CD4-positive, alpha-beta T cell (primary cell): ENCODE measurements at regions of chr17 and their contacts with region 1.

Region 1: GRCh38 chr17:42720996-42721583 is 23.8 kb downstream of the EZH1 start:
- DNase-seq: peak in 9 of 14 experiments; percentile 2 to 80 (median 27)
- ATAC-seq: peak; percentile 94
- H3K4me3 ChIP-seq: no peak overlapping the region
- H3K4me3 Mint-ChIP-seq: no peak overlapping the region
- H3K27ac ChIP-seq: no peak overlapping the region
- H3K27ac Mint-ChIP-seq: no peak overlapping the region
- H3K4me1 ChIP-seq: no peaks in the 10 kb centered on the region
- H3K4me1 Mint-ChIP-seq: no peaks in the 10 kb centered on the region
- H3K27me3 ChIP-seq: no peaks in the 10 kb centered on the region
- H3K27me3 Mint-ChIP-seq: no peaks in the 10 kb centered on the region
- CTCF ChIP-seq: peak; percentile 75

Region 2: DNA sequence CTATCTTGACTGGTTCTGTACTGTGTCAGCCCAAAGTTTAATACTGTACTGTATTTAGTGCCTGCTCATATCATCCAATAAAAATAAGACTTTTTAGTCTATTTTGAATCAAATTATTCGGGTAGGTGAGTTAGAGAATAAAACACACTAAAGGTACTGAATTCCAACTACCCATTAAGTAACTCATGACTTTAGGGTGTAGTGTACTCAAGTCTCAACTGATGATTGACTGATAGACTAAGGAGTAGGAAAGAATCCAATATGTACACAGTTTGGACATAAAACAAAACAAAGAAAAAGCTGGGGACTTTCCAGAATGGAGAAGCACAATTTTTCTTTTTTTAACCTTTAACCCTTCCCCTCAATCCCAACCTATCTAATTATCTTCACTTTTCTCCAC is 19.6 kb after region 1 on chr17:
- CTCF ChIA-PET with region 1: no interaction called
- POLR2A ChIA-PET with region 1: no interaction called
- intact Hi-C with region 1: no loop called
- DNase-seq: no peak
- ATAC-seq: no peak
- H3K4me3 ChIP-seq: no peak overlapping the region
- H3K4me3 Mint-ChIP-seq: no peak overlapping the region
- H3K27ac ChIP-seq: no peak overlapping the region
- H3K27ac Mint-ChIP-seq: no peak overlapping the region
- H3K4me1 ChIP-seq: peaks cover 29% of the 10 kb centered on the region
- H3K4me1 Mint-ChIP-seq: peaks cover 32% of the 10 kb centered on the region
- H3K27me3 ChIP-seq: no peaks in the 10 kb centered on the region
- H3K27me3 Mint-ChIP-seq: no peaks in the 10 kb centered on the region
- CTCF ChIP-seq: no peak

Region 3: DNA sequence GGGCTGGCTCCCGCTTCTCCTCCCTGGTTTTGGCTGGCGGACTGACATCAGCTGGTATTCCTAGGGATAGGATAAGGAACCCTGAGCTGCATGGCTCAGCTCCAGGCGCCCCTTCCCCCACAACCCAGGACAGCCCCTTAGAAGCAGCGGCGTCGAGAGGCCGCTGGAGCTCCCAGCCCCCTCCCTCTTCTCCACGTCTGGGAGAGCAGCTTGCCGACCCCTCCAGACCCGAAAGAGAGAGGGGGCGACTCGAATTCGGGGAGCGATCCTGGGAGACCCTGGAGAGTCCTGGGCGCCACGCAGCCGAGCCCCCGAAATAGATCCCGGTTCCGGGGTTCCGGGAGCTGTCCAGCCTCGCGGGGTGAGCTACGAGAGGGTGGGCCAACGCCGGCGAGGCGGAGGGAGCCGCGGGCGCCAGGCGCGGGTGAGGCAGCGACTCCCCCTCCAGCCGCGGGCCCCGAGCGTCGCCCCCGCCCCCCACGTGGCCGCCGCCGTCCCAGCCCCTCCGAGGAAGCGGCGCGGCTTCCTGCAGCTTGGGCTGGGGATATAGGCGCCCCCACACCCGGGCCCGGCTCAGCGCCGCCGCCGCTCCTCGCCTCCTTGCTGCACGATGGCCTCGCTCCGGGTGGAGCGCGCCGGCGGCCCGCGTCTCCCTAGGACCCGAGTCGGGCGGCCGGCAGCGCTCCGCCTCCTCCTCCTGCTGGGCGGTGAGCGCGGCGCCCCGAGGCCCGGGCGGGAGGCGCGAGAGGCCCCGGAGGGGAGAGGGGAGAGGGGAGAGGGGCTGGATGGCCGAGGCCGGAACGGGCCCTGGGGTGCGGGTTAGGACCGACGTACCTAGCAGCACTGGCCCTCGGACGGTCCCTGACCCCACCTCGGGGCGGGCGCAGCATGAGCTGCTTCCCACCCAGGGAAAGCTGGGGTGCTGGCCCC is 39.8 kb after region 1 on chr17 and contains the start of gene RAMP2:
- CTCF ChIA-PET with region 1: interaction called, 3 read pairs
- POLR2A ChIA-PET with region 1: no interaction called
- intact Hi-C with region 1: loop called (anchors 1 kb)
- DNase-seq: peak in 3 of 14 experiments; percentile 13 to 41 (median 37)
- ATAC-seq: peak; percentile 39
- H3K4me3 ChIP-seq: peak within 1 kb of the TSS; percentile 10
- H3K4me3 Mint-ChIP-seq: peak within 1 kb of the TSS; percentile 67
- H3K27ac ChIP-seq: no peak within 1 kb of the TSS
- H3K27ac Mint-ChIP-seq: no peak within 1 kb of the TSS
- H3K4me1 ChIP-seq: peaks cover 15% of the 10 kb centered on the region
- H3K4me1 Mint-ChIP-seq: peaks cover 9% of the 10 kb centered on the region
- H3K27me3 ChIP-seq: peaks cover 47% of the 10 kb centered on the region in 2 experiments
- H3K27me3 Mint-ChIP-seq: peaks cover 79% of the 10 kb centered on the region
- CTCF ChIP-seq: no peak
- total RNA-seq, gene RAMP2: not detected

Region 4: GRCh38 chr17:42819944-42820535 is 99.0 kb after region 1 on chr17:
- CTCF ChIA-PET with region 1: no interaction called
- POLR2A ChIA-PET with region 1: interaction called, 5 read pairs
- intact Hi-C with region 1: loop called in 1 of 2 experiments (anchors 2 kb)
- DNase-seq: peak; percentile 29 to 79 (median 48)
- ATAC-seq: no peak
- H3K4me3 ChIP-seq: no peak overlapping the region
- H3K4me3 Mint-ChIP-seq: peak overlapping the region; percentile 43
- H3K27ac ChIP-seq: no peak overlapping the region
- H3K27ac Mint-ChIP-seq: peak overlapping the region; percentile 49
- H3K4me1 ChIP-seq: peaks cover 22% of the 10 kb centered on the region
- H3K4me1 Mint-ChIP-seq: peaks cover 28% of the 10 kb centered on the region
- H3K27me3 ChIP-seq: no peaks in the 10 kb centered on the region
- H3K27me3 Mint-ChIP-seq: no peaks in the 10 kb centered on the region
- CTCF ChIP-seq: peak; percentile 72

Region 5: DNA sequence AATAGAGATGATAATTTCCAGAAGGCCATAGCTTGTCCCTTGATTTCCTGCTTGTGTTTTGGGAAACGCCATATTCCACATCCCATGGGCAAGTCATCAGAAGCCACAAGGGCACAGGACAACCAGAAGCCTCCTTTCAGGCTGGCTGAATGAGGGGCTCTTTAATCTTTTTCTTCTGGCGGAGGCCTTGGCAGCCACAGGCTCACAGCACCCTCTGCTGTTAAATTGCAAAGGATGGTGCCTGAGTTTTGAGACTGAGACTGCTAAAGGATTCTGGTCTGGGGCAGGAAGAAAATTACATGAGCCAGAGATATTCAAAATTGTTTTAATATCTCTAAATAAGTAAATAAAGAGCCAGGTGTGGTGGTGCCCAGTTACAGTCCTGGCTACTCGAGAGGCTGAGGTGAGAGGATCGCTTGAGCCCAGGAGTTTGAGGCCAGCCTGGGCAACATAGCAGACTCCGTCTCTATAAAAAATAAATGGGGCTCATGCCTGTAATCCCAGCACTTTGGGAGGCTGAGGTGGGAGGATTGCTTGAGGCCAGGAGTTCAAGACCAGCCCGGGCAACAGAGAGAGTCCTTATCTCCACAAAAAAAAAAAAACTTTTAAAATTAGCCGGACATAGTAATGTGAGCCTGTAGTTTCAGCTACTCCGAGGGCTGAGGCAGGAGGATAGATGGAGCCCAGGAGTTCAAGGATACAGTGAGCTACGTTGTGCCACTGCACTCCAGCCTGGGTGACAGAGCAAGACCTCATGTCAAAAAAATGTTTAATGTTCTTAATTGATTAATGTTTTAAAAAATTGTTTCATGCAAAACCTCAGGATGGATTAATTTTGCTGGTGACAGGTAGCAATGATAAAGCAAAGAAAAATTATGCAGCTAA is 216.9 kb after region 1 on chr17:
- CTCF ChIA-PET with region 1: no interaction called
- POLR2A ChIA-PET with region 1: no interaction called
- intact Hi-C with region 1: loop called in 1 of 2 experiments (anchors 5 kb)
- DNase-seq: peak in 6 of 14 experiments; percentile 1 to 48 (median 24)
- ATAC-seq: no peak
- H3K4me3 ChIP-seq: no peak overlapping the region
- H3K4me3 Mint-ChIP-seq: no peak overlapping the region
- H3K27ac ChIP-seq: no peak overlapping the region
- H3K27ac Mint-ChIP-seq: no peak overlapping the region
- H3K4me1 ChIP-seq: no peaks in the 10 kb centered on the region
- H3K4me1 Mint-ChIP-seq: no peaks in the 10 kb centered on the region
- H3K27me3 ChIP-seq: no peaks in the 10 kb centered on the region
- H3K27me3 Mint-ChIP-seq: peaks cover 7% of the 10 kb centered on the region
- CTCF ChIP-seq: no peak

Region 6: DNA sequence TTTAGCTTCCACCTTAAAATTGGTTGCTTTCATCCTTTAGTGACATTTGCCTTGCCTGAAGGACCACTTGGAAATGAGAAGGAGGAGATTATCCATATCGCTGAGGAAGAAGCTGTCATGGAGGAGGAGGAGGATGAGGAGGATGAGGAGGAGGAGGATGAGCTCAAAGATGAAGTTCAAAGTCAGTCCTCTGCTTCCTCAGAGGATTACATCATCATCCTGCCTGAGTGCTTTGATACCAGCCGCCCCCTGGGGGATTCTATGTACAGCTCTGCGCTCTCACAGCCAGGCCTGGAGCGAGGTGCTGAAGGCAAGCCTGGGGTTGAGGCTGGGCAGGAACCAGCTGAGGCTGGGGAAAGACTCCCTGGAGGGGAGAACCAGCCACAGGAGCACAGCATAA is 479.0 kb after region 1 on chr17:
- CTCF ChIA-PET with region 1: no interaction called
- POLR2A ChIA-PET with region 1: no interaction called
- intact Hi-C with region 1: loop called in 1 of 2 experiments (anchors 10 kb)
- DNase-seq: no peak
- ATAC-seq: no peak
- H3K4me3 ChIP-seq: no peak overlapping the region
- H3K4me3 Mint-ChIP-seq: no peak overlapping the region
- H3K27ac ChIP-seq: no peak overlapping the region
- H3K27ac Mint-ChIP-seq: no peak overlapping the region
- H3K4me1 ChIP-seq: no peaks in the 10 kb centered on the region
- H3K4me1 Mint-ChIP-seq: no peaks in the 10 kb centered on the region
- H3K27me3 ChIP-seq: no peaks in the 10 kb centered on the region
- H3K27me3 Mint-ChIP-seq: no peaks in the 10 kb centered on the region
- CTCF ChIP-seq: no peak